IMR-90 (cell line): ENCODE measurements at regions of chr1 and their contacts with region 1.

Region 1: GRCh38 chr1:67191668-67192520 is 25.6 kb downstream of the IL23R start:
- DNase-seq: no peak
- ATAC-seq: peak; percentile 42
- H3K4me3 ChIP-seq: no peak overlapping the region
- H3K27ac ChIP-seq: no peak overlapping the region
- H3K4me1 ChIP-seq: peaks cover 2% of the 10 kb centered on the region; the same call in 1 of the 2 replicates
- H3K27me3 ChIP-seq: peaks cover 3% of the 10 kb centered on the region; the same call in 1 of the 2 replicates
- CTCF ChIP-seq: no peak
- POLR2A ChIP-seq: no peak
- RAD21 ChIP-seq: no peak

Region 2: DNA sequence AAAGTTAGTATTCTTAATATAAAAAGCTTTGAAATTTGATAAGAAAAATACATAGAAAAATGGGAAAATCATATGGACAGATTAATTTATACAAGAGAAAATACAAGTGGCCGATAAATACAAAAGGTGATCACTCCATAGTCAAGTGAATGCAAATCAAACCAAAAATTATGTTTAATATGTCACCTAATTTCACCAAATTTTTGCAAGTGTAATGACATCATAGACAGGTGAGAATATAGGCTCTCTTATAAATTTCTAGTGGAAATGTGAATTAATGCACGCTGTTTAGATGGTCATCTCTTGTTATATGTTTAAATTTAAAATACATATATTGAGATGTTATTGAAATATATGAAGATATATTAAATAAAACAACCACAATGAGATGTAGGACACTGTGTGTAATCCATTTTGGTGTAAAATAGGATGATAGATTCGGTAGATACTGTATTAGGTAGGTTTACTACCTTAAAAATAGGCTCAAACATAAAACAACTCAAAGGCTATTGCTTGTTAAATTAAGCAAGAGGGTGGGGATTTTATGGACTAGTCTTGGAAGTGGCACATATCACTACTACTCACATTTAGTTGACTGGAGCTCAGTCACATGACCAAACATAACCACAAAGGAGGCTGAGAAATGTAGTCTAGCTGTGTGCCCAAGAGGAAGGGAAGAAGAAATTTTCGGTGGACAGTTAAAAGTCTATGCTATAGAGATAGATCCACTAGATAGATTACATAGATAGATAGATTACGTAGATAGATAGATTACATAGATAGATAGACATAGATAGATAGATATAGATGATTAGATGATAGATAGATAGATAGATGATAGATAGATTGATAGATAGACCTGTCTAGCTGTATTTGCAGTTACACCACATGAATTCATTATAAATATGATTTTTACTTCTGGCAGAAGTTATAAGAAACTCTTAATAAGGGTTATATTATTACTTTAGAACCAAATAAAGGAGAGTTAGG is 400.0 kb before region 1 on chr1:
- CTCF ChIA-PET with region 1: no interaction called
- POLR2A ChIA-PET with region 1: no interaction called
- dilution Hi-C with region 1: no loop called
- in situ Hi-C with region 1: no loop called
- intact Hi-C with region 1: loop called (anchors 1 kb)
- DNase-seq: no peak
- ATAC-seq: no peak
- H3K4me3 ChIP-seq: no peak overlapping the region
- H3K27ac ChIP-seq: no peak overlapping the region
- H3K4me1 ChIP-seq: no peaks in the 10 kb centered on the region
- H3K27me3 ChIP-seq: no peaks in the 10 kb centered on the region
- CTCF ChIP-seq: no peak
- POLR2A ChIP-seq: no peak
- RAD21 ChIP-seq: no peak

Region 3: GRCh38 chr1:66954208-66954607 is 237.7 kb before region 1 on chr1:
- CTCF ChIA-PET with region 1: no interaction called
- POLR2A ChIA-PET with region 1: no interaction called
- dilution Hi-C with region 1: no loop called
- in situ Hi-C with region 1: no loop called
- intact Hi-C with region 1: no loop called
- DNase-seq: no peak
- ATAC-seq: no peak
- H3K4me3 ChIP-seq: no peak overlapping the region
- H3K27ac ChIP-seq: no peak overlapping the region
- H3K4me1 ChIP-seq: no peaks in the 10 kb centered on the region
- H3K27me3 ChIP-seq: no peaks in the 10 kb centered on the region
- CTCF ChIP-seq: no peak
- POLR2A ChIP-seq: no peak
- RAD21 ChIP-seq: no peak